Activated CD8-positive, alpha-beta T cell treated with anti-CD3 and anti-CD28 coated beads for 36 hours (primary cell): ENCODE measurements at regions of chr18 and their contacts with region 1.

Region 1: DNA sequence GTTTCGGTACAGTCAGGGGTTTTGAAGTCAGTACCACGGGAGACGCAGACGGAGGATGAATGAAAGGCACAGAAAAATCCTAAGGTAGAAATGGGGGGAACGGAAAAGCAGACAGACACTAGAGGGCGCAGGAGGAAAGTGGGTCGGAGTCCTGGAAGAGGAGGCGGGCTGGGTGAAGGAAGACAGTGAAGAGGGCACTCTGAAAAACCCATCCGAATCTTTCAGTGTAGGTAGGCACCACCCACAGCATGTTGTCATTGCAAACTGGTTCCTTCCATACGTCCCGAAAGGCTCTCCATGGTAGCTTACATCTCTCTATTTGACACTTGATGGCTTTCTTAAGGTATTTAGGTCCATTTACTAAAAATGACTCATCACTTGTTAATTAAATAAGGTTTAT is 18.5 kb upstream of the ZNF236 start:
- DNase-seq: peak; percentile 82
- ATAC-seq: peak; percentile 80
- H3K4me3 Mint-ChIP-seq: no peak overlapping the region
- H3K27ac Mint-ChIP-seq: no peak overlapping the region
- H3K4me1 Mint-ChIP-seq: peaks cover 9% of the 10 kb centered on the region
- H3K27me3 Mint-ChIP-seq: peaks cover 14% of the 10 kb centered on the region
- CTCF ChIP-seq: peak; percentile 72

Region 2: DNA sequence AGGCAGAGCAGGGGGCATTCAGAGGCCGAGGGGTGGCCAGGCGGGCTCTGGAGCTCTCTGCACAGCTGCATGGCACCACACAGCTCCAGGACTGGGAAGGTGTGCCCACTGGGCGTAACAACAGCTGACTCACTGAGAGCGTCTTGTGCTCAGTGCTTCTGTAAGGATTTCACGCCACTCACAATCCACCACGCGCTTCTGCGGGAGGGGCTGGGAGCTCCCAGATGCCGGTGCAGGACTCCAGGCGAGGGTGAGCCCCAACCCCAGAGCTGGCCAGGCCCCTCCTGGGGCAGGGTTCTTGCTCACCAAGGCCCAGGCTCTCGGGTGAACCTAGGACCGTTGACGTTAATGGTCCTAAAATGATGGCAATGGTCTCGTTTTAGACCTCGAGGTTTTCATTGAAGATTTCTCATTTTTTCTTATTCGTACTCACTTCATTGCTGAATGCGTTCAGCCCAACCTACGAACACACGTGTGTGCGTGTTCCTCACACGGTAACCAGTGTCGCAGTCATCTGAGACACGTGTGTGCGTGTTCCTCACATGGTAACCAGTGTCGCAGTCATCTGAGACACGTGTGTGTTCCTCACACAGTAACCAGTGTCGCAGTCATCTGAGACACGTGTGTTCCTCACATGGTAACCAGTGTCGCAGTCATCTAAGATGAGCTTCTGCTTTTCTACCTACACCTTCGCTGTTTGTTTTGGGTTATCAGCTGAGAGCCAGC is 19.9 kb before region 1 on chr18:
- CTCF ChIA-PET with region 1: interaction called, 19 read pairs
- POLR2A ChIA-PET with region 1: no interaction called
- intact Hi-C with region 1: no loop called
- DNase-seq: no peak
- ATAC-seq: no peak
- H3K4me3 Mint-ChIP-seq: no peak overlapping the region
- H3K27ac Mint-ChIP-seq: no peak overlapping the region
- H3K4me1 Mint-ChIP-seq: peaks cover 4% of the 10 kb centered on the region
- H3K27me3 Mint-ChIP-seq: peaks cover 9% of the 10 kb centered on the region
- CTCF ChIP-seq: no peak

Region 3: DNA sequence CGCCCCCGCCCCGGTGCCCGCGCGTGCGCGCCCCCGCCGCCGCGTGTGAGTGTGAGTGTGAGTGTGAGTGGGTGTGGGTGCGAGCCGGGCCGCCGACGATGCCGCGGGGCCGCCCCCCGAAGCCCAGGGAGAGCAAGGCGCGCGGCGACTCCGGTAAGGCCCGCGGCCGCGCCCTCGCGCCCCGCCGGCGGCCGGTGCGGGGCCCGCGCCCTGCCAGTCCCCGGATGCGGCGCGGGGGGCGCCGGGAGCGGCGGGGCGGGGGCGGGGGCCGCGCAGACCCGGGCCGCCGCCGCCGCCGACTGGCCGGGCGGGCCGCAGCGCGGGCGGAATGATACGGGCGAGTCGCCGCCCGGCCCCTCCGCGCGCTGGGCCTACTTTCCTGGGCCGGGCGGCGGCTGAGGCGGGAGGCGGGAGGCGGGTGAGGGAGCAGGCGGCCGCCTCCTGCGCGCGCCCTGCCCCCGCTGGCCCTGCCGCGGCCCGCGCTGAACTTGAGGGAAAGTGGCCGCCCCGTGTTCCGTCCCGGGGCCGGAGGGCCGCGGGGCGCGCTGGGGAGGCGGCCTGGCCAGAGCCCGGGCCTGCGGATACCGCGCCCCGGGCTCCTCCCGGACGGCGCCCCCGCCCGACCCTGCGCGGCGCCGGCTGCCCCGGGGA is 18.8 kb after region 1 on chr18 and contains the start of gene ZNF236:
- CTCF ChIA-PET with region 1: interaction called, 85 read pairs
- POLR2A ChIA-PET with region 1: interaction called, 4 read pairs
- intact Hi-C with region 1: no loop called
- DNase-seq: peak; percentile 70
- ATAC-seq: peak; percentile 67
- H3K4me3 Mint-ChIP-seq: peak within 1 kb of the TSS; percentile 91
- H3K27ac Mint-ChIP-seq: peak within 1 kb of the TSS; percentile 93
- H3K4me1 Mint-ChIP-seq: peaks cover 50% of the 10 kb centered on the region
- H3K27me3 Mint-ChIP-seq: no peaks in the 10 kb centered on the region
- CTCF ChIP-seq: no peak
- total RNA-seq, gene ZNF236: 12.7 to 15.2 TPM

Region 4: GRCh38 chr18:76844742-76845485 is 41.1 kb after region 1 on chr18:
- CTCF ChIA-PET with region 1: interaction called, 14 read pairs
- POLR2A ChIA-PET with region 1: interaction called, 3 read pairs
- intact Hi-C with region 1: no loop called
- DNase-seq: no peak
- ATAC-seq: no peak
- H3K4me3 Mint-ChIP-seq: no peak overlapping the region
- H3K27ac Mint-ChIP-seq: no peak overlapping the region
- H3K4me1 Mint-ChIP-seq: peaks cover 18% of the 10 kb centered on the region
- H3K27me3 Mint-ChIP-seq: no peaks in the 10 kb centered on the region
- CTCF ChIP-seq: no peak

Region 5: DNA sequence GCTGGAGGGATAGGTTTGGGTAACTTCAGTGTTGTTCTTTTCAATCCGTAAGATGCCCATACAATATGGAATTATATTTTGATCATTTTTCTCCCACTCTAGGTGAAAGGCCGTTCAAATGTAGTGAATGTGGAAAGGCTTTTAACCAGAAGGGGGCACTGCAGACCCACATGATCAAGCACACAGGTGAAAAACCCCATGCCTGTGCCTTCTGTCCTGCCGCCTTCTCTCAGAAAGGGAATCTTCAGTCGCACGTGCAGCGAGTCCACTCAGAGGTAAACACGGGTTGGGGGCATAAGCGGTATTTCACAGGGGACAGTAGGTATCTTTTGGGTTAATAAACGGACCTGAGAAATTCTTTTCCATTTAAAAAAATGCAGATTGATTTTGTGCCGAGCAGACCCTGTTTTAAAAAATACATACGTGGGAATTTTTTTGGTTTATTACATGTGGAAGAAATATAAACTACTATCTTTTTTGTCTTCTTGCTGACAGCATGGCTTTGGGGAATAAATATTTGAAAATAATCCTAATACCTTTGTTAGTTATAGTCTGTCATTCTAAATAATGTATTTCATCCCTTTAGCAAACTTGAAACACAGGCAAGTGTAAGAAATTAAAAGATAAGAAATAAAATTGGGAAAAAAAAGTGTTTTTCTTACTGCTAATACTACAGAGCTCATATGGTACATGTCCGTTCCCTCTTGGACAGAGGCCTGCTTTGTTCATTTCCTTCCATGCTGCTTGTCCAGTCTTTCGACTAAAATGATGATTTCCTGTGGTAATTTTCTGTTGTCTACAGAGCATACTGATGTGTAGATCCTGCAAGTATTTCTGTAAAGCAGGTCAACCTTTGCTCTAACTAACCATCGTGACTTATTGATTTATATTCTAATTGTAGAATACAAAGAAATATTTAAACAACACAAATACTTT is 71.8 kb after region 1 on chr18:
- CTCF ChIA-PET with region 1: interaction called, 16 read pairs
- POLR2A ChIA-PET with region 1: no interaction called
- intact Hi-C with region 1: loop called (anchors 5 kb)
- DNase-seq: peak; percentile 67
- ATAC-seq: peak; percentile 69
- H3K4me3 Mint-ChIP-seq: no peak overlapping the region
- H3K27ac Mint-ChIP-seq: peak overlapping the region; percentile 68
- H3K4me1 Mint-ChIP-seq: peaks cover 13% of the 10 kb centered on the region
- H3K27me3 Mint-ChIP-seq: no peaks in the 10 kb centered on the region
- CTCF ChIP-seq: peak; percentile 75

Region 6: GRCh38 chr18:77000527-77000926 is 196.7 kb after region 1 on chr18:
- CTCF ChIA-PET with region 1: interaction called, 11 read pairs
- POLR2A ChIA-PET with region 1: no interaction called
- intact Hi-C with region 1: no loop called
- DNase-seq: peak; percentile 49
- ATAC-seq: peak; percentile 61
- H3K4me3 Mint-ChIP-seq: no peak overlapping the region
- H3K27ac Mint-ChIP-seq: no peak overlapping the region
- H3K4me1 Mint-ChIP-seq: peaks cover 19% of the 10 kb centered on the region
- H3K27me3 Mint-ChIP-seq: no peaks in the 10 kb centered on the region
- CTCF ChIP-seq: peak; percentile 99